ENCODE measurements at regions of chr17 and their contacts with region 1.

Region 1: GRCh38 chr17:35825206-35825605 is 15.9 kb downstream of the TAF15 start:
- DNase-seq: no peak
- H3K4me3 Mint-ChIP-seq: no peak overlapping the region
- H3K27ac Mint-ChIP-seq: no peak overlapping the region
- H3K4me1 Mint-ChIP-seq: peaks cover 6% of the 10 kb centered on the region
- H3K27me3 Mint-ChIP-seq: no peaks in the 10 kb centered on the region
- CTCF ChIP-seq: no peak

Region 2: DNA sequence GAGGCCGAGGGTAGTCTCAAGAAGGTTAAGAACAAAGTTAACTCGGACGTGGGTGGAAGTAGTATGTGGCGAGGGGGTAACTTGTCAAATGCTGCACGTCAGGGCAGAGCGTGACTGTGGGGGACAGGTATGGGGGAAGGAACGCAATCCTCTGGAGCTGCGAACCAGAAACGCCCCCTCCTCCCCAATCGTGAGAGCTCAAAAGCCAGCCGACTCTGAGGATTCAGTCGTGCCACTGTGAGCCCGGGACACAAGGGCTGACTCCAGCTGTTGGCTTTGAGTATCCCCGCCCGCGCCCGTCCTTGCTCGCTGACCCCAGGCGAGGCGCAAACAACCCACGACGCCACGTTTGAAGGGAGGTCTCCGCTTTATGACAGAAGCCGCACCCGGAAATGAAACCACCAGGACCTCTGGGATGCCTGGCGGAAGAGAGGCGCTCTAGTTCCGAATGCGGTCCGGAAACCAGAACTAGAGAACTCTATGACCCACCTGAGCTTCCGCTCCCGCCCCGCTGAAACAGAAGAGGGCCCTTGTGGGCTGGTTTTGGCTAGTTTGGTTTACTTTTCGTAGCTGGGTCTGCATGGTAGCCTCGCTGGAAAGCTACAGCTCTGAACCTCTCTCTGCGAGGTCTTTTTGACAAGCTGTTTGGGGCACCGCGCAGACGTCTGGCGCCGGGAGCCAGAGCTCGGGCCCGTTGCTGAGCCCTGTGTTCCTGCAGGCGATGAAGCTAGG is 246.8 kb before region 1 on chr17 and contains the start of gene PEX12:
- CTCF ChIA-PET with region 1: no interaction called
- POLR2A ChIA-PET with region 1: no interaction called
- intact Hi-C with region 1: no loop called
- DNase-seq: peak; percentile 94
- H3K4me3 Mint-ChIP-seq: peak within 1 kb of the TSS; percentile 89
- H3K27ac Mint-ChIP-seq: peak within 1 kb of the TSS; percentile 92
- H3K4me1 Mint-ChIP-seq: no peaks in the 10 kb centered on the region
- H3K27me3 Mint-ChIP-seq: no peaks in the 10 kb centered on the region
- CTCF ChIP-seq: no peak
- total RNA-seq, gene PEX12: 5.8 and 6.8 TPM in 2 replicates

Region 3: GRCh38 chr17:35841505-35841904 is 16.3 kb after region 1 on chr17:
- CTCF ChIA-PET with region 1: no interaction called
- POLR2A ChIA-PET with region 1: interaction called, 10 read pairs
- intact Hi-C with region 1: no loop called
- DNase-seq: peak; percentile 21
- H3K4me3 Mint-ChIP-seq: no peak overlapping the region
- H3K27ac Mint-ChIP-seq: no peak overlapping the region
- H3K4me1 Mint-ChIP-seq: no peaks in the 10 kb centered on the region
- H3K27me3 Mint-ChIP-seq: no peaks in the 10 kb centered on the region
- CTCF ChIP-seq: no peak

Measured in MCF 10A (cell line).